ENCODE measurements at regions of chr3 and their contacts with region 1.

Region 1: DNA sequence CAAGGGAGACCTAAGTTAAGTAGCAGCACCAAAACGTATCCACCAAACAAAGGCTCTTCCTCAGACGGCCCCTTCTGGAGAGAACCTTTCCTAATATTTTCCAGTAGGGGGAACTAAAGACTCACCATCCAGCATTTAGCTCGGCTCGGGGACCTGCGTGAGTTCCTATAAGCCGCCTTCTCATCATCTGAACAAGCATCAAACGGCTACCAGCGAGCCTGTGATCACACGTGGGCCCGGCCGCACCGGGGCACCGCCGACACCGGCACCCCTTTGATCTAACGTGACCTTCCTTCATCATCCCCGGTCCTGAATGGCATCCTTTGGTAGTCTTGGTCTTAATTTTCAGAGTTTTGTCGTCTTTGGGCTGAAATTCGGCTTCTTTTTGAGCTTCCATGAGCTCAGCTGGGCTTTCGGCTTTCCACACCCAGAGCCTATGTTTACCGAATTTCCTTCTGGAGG is 1.4 kb upstream of the ROBO2 start:
- DNase-seq: peak; percentile 84 to 95
- H3K4me3 ChIP-seq: peak overlapping the region; percentile 44
- H3K4me1 ChIP-seq: peaks cover 14% of the 10 kb centered on the region
- H3K27me3 ChIP-seq: no peaks in the 10 kb centered on the region

Region 2: GRCh38 chr3:76487446-76487845 is 551.1 kb before region 1 on chr3:
- in situ Hi-C with region 1: no loop called
- DNase-seq: no peak
- H3K4me3 ChIP-seq: no peak overlapping the region
- H3K4me1 ChIP-seq: no peaks in the 10 kb centered on the region
- H3K27me3 ChIP-seq: no peaks in the 10 kb centered on the region

Region 3: GRCh38 chr3:76873532-76874242 is 164.8 kb before region 1 on chr3:
- in situ Hi-C with region 1: no loop called
- DNase-seq: no peak
- H3K4me3 ChIP-seq: no peak overlapping the region
- H3K4me1 ChIP-seq: no peaks in the 10 kb centered on the region
- H3K27me3 ChIP-seq: no peaks in the 10 kb centered on the region

Region 4: GRCh38 chr3:77254967-77255831 is 216.7 kb after region 1 on chr3:
- in situ Hi-C with region 1: loop called (anchors 5 kb)
- DNase-seq: peak; percentile 72 to 79
- H3K4me3 ChIP-seq: no peak overlapping the region
- H3K4me1 ChIP-seq: peaks cover 4% of the 10 kb centered on the region; the same call in 1 of the 2 replicates
- H3K27me3 ChIP-seq: no peaks in the 10 kb centered on the region

Region 5: DNA sequence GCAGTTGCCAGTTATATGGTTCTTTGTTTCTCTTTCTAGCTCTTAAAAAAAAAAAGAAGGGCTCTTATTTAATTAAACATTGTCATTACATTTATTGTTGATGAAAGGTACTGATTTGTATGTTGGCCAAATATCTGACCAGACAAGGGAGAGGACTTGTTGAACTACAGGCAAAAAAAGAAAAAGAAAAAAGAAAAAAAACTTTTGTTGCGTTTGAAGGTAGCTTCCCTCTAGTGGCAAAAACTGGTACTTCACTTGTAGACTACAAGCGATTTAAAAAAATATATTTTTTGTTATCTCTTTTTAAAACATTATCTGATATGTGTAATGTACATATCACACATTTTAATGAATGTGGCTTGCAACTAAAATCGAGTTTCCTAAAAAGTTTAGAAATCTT is 282.0 kb after region 1 on chr3:
- in situ Hi-C with region 1: loop called (anchors 5 kb)
- DNase-seq: peak in 1 of 2 experiments; percentile 56
- H3K4me3 ChIP-seq: no peak overlapping the region
- H3K4me1 ChIP-seq: peaks cover 16% of the 10 kb centered on the region
- H3K27me3 ChIP-seq: no peaks in the 10 kb centered on the region